ENCODE measurements at regions of chr7 and their contacts with region 1.

Region 1: DNA sequence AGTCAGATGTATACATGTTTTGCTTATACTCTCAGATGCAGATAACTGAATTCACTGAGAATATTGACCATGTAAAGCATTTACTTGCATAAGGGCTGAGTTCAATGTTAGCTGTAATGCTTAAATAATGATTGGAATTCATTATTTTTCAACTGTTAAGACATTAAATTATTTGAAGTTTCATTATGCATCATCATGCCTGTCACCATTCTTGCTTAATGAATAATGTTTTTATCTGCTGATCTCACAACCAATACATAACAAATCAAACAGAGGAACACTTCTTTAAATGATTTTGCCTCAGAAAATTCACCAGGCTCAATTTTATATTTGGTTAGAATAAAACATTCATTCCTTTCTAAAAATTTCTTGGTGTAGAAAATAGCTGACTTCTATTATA is 233.4 kb downstream of the GPR37 start:
- DNase-seq: no peak
- ATAC-seq: no peak
- H3K4me3 ChIP-seq: no peak overlapping the region
- H3K4me3 Mint-ChIP-seq: no peak overlapping the region
- H3K27ac ChIP-seq: no peak overlapping the region
- H3K27ac Mint-ChIP-seq: no peak overlapping the region
- H3K4me1 ChIP-seq: no peaks in the 10 kb centered on the region
- H3K4me1 Mint-ChIP-seq: no peaks in the 10 kb centered on the region
- H3K27me3 ChIP-seq: no peaks in the 10 kb centered on the region
- H3K27me3 Mint-ChIP-seq: no peaks in the 10 kb centered on the region
- CTCF ChIP-seq: no peak

Region 2: GRCh38 chr7:124575176-124575575 is 43.0 kb after region 1 on chr7:
- CTCF ChIA-PET with region 1: no interaction called
- POLR2A ChIA-PET with region 1: no interaction called
- intact Hi-C with region 1: loop called in 1 of 2 experiments (anchors 10 kb)
- DNase-seq: no peak
- ATAC-seq: no peak
- H3K4me3 ChIP-seq: no peak overlapping the region
- H3K4me3 Mint-ChIP-seq: no peak overlapping the region
- H3K27ac ChIP-seq: no peak overlapping the region
- H3K27ac Mint-ChIP-seq: no peak overlapping the region
- H3K4me1 ChIP-seq: no peaks in the 10 kb centered on the region
- H3K4me1 Mint-ChIP-seq: no peaks in the 10 kb centered on the region
- H3K27me3 ChIP-seq: no peaks in the 10 kb centered on the region
- H3K27me3 Mint-ChIP-seq: no peaks in the 10 kb centered on the region
- CTCF ChIP-seq: no peak